Activated naive CD4-positive, alpha-beta T cell treated with anti-CD3 and anti-CD28 coated beads for 36 hours (primary cell): ENCODE measurements at regions of chr5 and their contacts with region 1.

Region 1: DNA sequence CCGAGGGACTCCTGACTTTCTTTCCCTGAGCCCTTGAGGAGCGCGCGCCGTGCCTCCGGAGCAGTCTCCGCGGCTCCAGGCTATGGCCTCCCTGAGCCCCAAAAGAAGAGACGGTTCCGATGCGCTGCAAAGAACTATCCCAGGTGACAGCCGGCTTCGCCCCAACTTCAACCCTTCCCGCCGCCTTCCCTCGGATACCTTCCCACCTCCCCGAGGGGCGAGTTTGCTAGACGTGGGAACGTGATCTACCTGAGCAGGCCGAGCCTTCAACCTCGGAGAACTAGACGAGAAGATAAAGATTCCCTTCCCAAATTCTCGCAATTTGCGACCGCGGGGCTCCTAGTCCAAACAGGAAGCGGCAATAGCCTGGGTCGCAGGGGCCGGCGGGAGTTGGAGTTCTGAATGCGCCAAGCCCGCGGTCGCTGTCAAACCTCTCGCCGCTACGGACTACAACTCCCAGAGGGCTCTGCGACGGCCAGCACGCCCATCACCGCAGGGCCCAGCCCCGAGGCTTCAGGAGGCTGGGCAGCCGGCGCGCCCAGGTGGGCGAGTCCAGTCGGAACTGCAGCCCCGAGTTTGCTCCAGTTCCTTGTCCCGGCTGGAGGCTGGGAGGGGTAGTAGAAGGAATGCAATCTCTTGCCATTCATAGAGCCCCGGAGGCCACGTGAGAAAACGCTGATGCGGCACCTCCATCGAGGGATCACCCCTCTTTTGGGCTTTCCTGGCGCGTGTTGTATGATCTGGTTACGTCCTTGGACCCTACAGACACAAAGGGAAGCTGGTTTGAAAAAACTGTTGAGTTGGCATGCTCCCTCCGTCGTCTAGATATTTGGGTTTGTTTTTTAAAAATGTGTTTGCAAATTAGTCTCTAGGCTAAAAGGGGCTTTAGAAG is at the start of gene SLC38A9:
- DNase-seq: peak; percentile 97
- H3K4me3 Mint-ChIP-seq: peak within 1 kb of the TSS; percentile 92
- H3K27ac Mint-ChIP-seq: peak within 1 kb of the TSS; percentile 62
- H3K4me1 Mint-ChIP-seq: peaks cover 23% of the 10 kb centered on the region
- H3K27me3 Mint-ChIP-seq: no peaks in the 10 kb centered on the region
- total RNA-seq, gene SLC38A9: 9.2 to 10.1 TPM

Region 2: GRCh38 chr5:55226027-55226933 is 485.9 kb before region 1 on chr5:
- CTCF ChIA-PET with region 1: no interaction called
- intact Hi-C with region 1: loop called (anchors 5 kb)
- DNase-seq: peak; percentile 85
- H3K4me3 Mint-ChIP-seq: peak overlapping the region; percentile 65
- H3K27ac Mint-ChIP-seq: no peak overlapping the region
- H3K4me1 Mint-ChIP-seq: peaks cover 44% of the 10 kb centered on the region
- H3K27me3 Mint-ChIP-seq: peaks cover 86% of the 10 kb centered on the region

Region 3: DNA sequence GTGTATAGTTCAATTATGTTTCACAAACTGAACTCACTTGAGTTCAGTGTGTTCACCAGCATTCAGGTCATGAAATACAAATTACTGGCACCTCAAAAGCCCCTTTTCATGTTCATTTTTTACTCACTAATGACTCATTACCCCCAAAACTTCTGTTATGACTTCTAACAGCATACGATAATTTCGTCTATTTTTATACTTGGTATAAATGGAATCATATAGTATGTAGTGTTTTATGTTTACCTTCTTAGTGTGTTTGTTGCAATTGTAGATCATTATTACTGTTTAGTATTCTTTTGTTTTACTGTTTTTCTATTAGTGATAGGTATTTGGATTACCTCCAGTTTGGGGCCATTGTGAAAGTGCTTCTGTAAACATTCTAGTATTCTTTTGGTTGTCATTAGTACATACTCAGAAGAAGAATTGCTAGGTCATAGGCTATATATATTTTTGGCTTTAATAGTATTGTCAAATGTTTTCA is 59.0 kb after region 1 on chr5:
- CTCF ChIA-PET with region 1: no interaction called
- intact Hi-C with region 1: loop called (anchors 1 kb)
- DNase-seq: no peak
- H3K4me3 Mint-ChIP-seq: no peak overlapping the region
- H3K27ac Mint-ChIP-seq: no peak overlapping the region
- H3K4me1 Mint-ChIP-seq: peaks cover 12% of the 10 kb centered on the region
- H3K27me3 Mint-ChIP-seq: no peaks in the 10 kb centered on the region

Region 4: DNA sequence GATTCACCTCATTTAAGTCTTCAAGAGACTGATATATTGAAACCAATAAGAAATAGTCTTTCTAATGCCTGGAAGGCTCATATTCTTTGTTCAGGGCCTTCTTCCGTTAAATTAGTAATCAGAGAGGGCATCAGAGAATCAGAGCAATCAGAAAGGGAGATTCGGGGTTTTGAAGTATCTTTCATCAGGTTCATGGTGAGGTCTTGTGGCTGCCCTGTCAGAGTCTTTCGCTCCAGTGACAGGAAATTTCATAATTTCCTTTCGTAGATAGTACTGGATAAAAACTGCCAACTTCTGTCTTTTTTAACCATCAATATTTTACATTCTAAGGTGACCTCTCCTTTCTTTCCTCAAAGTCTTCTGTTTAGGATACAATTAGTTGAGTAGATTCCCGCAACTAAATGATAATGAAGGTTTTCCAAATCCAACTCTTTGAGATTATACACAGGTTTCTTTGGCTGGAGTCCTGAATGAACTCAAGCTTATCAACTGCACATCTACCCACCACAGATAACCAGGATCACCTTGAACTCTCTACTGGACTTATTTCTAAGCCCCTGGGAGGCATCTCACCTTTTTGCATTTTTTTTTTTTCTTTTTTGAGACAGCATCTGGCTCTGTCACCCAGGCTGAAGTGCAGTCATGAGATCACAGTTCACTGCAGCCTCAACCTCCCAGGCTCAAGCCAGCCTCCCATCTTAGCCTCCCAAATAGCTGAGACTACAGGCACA is 144.5 kb after region 1 on chr5:
- CTCF ChIA-PET with region 1: no interaction called
- intact Hi-C with region 1: loop called (anchors 1 kb)
- DNase-seq: peak; percentile 56
- H3K4me3 Mint-ChIP-seq: no peak overlapping the region
- H3K27ac Mint-ChIP-seq: peak overlapping the region; percentile 54
- H3K4me1 Mint-ChIP-seq: peaks cover 41% of the 10 kb centered on the region
- H3K27me3 Mint-ChIP-seq: no peaks in the 10 kb centered on the region

Region 5: DNA sequence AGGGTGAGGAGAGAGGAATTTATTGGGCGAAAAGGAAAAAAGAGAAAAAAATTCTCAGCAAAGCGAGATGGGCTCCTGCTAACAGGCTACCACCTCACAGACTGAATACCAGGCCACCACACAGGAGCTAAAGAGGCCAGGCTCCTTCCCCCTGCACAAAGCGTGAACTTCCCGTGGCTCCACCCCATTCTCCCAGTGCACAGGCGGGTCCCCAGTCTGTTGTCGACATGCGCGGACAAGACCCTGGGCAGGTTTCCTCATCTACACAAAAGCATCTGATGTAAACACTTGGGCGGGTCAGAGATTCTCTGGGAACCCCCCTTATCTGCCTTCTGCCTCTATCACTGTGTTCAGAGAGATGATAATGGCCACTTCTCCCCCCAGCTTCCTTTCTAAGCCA is 173.1 kb after region 1 on chr5:
- CTCF ChIA-PET with region 1: no interaction called
- intact Hi-C with region 1: no loop called
- DNase-seq: no peak
- H3K4me3 Mint-ChIP-seq: no peak overlapping the region
- H3K27ac Mint-ChIP-seq: no peak overlapping the region
- H3K4me1 Mint-ChIP-seq: peaks cover 6% of the 10 kb centered on the region
- H3K27me3 Mint-ChIP-seq: peaks cover 4% of the 10 kb centered on the region

Region 6: DNA sequence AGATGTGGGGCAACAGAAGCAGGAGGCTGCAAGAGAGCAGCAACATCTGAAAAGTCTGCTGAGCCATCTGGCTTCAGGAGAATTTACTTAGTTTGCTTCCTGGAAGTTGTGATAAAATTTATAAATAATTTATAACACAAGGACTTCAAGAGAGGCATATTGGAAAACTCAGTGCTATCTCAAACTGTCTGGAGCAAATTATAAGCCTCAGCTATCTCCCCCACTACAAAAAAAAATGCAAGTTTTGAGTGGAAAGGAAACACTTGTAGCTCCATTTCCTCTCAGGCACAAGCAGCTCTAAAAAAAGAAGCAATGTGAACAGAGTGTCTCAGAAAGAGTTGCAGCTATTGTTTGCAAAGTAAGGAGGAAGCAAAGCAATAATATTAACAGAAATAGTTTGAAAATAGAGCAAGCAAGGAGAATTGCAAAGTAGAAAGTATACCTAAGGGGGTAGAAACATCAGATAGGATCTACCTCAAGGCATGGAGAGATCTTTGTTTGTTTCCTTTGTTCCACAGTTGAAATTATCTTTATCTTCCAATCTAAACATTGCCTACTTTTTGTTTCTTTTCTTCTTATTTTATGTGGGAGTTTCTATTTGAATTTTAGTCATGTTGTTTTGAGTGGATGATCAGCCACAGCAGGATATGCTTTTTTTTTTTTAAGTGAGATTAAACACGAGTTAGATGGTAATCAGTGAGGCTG is 338.5 kb after region 1 on chr5:
- CTCF ChIA-PET with region 1: no interaction called
- intact Hi-C with region 1: loop called (anchors 10 kb)
- DNase-seq: no peak
- H3K4me3 Mint-ChIP-seq: peak overlapping the region; percentile 10
- H3K27ac Mint-ChIP-seq: peak overlapping the region; percentile 52
- H3K4me1 Mint-ChIP-seq: peaks cover 61% of the 10 kb centered on the region
- H3K27me3 Mint-ChIP-seq: no peaks in the 10 kb centered on the region